ENCODE measurements at regions of chr7 and their contacts with region 1.

Region 1: DNA sequence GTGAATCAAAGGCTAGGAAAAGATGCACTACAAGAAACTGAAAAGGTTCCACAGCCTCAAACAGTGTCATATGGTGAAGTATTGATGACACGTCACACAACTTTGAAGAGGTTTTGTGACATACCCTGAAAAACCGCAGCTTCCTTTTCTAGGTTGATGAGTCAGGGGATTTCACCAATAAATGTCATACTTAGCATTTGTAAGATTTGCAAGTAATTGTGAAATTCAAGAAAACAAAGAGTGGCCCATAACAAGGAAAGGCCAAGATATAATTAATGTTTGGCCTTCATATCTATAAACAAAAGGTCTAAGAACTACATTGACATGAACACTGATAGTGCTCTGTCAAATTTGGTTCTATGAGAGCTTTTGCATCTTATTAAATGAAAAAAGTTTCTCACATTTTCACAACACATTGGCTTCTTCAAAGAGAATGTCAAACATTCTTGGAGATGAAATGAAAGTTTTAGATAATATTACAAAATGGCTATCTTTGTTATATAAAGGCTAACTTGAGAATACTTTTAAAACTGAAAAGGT is 62.0 kb upstream of the NAMPT start:
- DNase-seq: peak; percentile 82
- ATAC-seq: peak; percentile 87
- H3K4me3 Mint-ChIP-seq: peak overlapping the region; percentile 39
- H3K27ac Mint-ChIP-seq: peak overlapping the region; percentile 72
- H3K4me1 Mint-ChIP-seq: peaks cover 40% of the 10 kb centered on the region
- H3K27me3 Mint-ChIP-seq: peaks cover 2% of the 10 kb centered on the region

Region 2: GRCh38 chr7:106285051-106285854 is 61.5 kb before region 1 on chr7:
- CTCF ChIA-PET with region 1: interaction called, 3 read pairs
- POLR2A ChIA-PET with region 1: interaction called, 33 read pairs
- DNase-seq: peak; percentile 96
- ATAC-seq: peak; percentile 83
- H3K4me3 Mint-ChIP-seq: peak overlapping the region; percentile 97
- H3K27ac Mint-ChIP-seq: peak overlapping the region; percentile 99
- H3K4me1 Mint-ChIP-seq: peaks cover 42% of the 10 kb centered on the region
- H3K27me3 Mint-ChIP-seq: peaks cover 5% of the 10 kb centered on the region

Measured in activated CD8-positive, alpha-beta T cell treated with anti-CD3 and anti-CD28 coated beads, Interleukin-2, amount 10 ng/mL, durations not matched to agents 7 days and 5 days (primary cell).